CD4-positive, alpha-beta T cell (primary cell): ENCODE measurements at regions of chr10 and their contacts with region 1.

Region 1: DNA sequence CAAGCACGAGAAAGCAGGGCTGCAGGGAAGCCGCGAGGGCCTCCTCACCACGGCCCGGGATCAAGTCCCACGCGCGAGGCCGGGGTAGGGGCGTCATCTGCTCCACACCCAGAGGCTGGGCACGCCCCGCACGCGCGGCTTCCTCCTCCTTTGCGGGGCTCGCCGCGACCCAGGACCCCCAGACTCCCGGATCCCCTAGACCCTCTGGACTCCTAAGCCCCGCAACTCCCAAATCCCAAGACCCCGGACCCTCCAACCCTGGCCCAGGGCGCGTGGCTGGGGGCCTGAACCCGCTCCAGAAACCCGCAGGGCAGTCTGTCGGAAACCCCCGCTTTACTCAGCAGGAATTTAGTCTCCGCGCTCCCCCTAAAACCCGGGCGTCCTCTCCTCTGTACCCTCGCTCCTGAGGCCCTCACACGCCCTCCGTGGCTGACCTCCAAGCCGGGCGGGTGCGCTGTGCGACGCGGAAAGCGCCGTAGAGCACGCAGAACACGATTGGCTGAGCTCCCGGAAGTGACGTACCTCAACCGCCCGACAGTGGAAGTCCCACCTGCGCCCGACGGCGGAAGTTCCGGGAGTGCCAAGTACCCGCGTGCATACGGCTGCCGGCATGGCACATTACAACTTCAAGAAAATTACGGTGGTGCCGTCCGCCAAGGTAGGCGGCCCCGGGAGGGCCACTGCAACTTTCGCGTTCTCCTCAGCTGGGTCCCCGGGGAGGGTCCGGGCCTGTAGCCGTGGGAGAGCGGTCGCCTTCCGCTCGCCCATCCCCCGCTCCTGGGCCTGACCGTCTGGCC is at the start of gene GTPBP4:
- DNase-seq: peak; percentile 90 to 99 (median 96)
- ATAC-seq: peak; percentile 94
- H3K4me3 ChIP-seq: peak within 1 kb of the TSS; percentile 85
- H3K4me3 Mint-ChIP-seq: peak within 1 kb of the TSS; percentile 100
- H3K27ac ChIP-seq: peak within 1 kb of the TSS; percentile 73 to 74
- H3K27ac Mint-ChIP-seq: peak within 1 kb of the TSS; percentile 99
- H3K4me1 ChIP-seq: peaks cover 23% of the 10 kb centered on the region
- H3K4me1 Mint-ChIP-seq: peaks cover 46% of the 10 kb centered on the region
- H3K27me3 ChIP-seq: no peaks in the 10 kb centered on the region
- H3K27me3 Mint-ChIP-seq: no peaks in the 10 kb centered on the region
- CTCF ChIP-seq: peak; percentile 12
- total RNA-seq, gene GTPBP4: 50.3 to 53.7 TPM

Region 2: DNA sequence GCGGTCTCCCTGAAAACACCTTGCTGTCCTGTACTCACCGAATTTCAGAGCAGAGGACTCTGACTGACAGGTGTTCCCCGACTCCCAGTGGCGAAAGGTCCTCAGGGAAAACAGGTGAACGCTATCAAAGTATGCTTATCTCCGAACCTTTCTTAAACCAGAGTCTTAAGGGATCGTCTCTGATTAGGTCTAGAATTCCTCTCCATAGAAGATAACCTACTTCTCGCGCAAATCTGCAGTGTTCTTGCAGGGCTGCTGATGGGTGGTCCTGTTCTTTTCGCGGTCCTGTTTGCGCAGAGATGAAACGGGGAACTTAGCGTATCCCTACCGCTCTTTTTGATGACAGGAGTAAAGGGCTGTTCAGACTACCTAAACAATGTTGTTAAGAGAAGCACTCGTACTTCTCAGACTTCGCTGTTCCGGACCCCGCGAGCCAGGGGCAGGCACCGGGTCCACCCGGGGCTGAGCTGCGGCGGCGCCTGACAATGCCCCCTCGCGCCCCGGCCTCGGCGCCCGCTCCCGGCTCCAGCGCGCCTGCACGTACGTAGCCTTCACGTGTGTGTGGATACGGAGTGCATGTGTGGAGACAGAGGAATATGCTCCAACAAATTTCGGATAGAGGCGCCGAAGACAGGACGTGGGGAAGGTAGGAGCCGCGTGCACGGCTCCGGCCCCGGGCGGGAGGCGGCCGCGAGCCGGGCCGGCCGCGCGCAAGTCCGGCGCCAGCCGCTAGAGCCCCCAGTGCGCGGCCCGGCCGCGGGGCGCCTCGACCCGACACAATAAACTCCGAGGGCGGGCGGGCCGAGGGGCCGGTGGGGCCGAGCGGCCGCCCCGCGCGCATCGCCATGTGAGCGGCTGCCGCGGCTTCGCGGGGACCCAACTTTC is 853.6 kb before region 1 on chr10:
- CTCF ChIA-PET with region 1: no interaction called
- POLR2A ChIA-PET with region 1: no interaction called
- intact Hi-C with region 1: loop called in 1 of 2 experiments (anchors 5 kb)
- DNase-seq: peak in 11 of 14 experiments; percentile 5 to 59 (median 21)
- ATAC-seq: peak; percentile 6
- H3K4me3 ChIP-seq: peak overlapping the region; percentile 51
- H3K4me3 Mint-ChIP-seq: peak overlapping the region; percentile 97
- H3K27ac ChIP-seq: no peak overlapping the region
- H3K27ac Mint-ChIP-seq: peak overlapping the region; percentile 94
- H3K4me1 ChIP-seq: peaks cover 24% of the 10 kb centered on the region
- H3K4me1 Mint-ChIP-seq: peaks cover 55% of the 10 kb centered on the region
- H3K27me3 ChIP-seq: no peaks in the 10 kb centered on the region
- H3K27me3 Mint-ChIP-seq: no peaks in the 10 kb centered on the region
- CTCF ChIP-seq: no peak

Region 3: GRCh38 chr10:931416-932318 is 56.4 kb before region 1 on chr10 and contains the start of gene LARP4B:
- CTCF ChIA-PET with region 1: interaction called, 5 read pairs
- POLR2A ChIA-PET with region 1: interaction called, 21 read pairs
- intact Hi-C with region 1: loop called (anchors 1 to 2 kb)
- DNase-seq: peak; percentile 92 to 99 (median 96)
- ATAC-seq: peak; percentile 97
- H3K4me3 ChIP-seq: peak within 1 kb of the TSS; percentile 64
- H3K4me3 Mint-ChIP-seq: peak within 1 kb of the TSS; percentile 98
- H3K27ac ChIP-seq: peak within 1 kb of the TSS; percentile 50 to 89
- H3K27ac Mint-ChIP-seq: peak within 1 kb of the TSS; percentile 89
- H3K4me1 ChIP-seq: peaks cover 27% of the 10 kb centered on the region
- H3K4me1 Mint-ChIP-seq: peaks cover 48% of the 10 kb centered on the region
- H3K27me3 ChIP-seq: no peaks in the 10 kb centered on the region
- H3K27me3 Mint-ChIP-seq: no peaks in the 10 kb centered on the region
- CTCF ChIP-seq: no peak
- total RNA-seq, gene LARP4B: 33.1 to 40.2 TPM

Region 4: GRCh38 chr10:1003884-1004675 is 16.0 kb after region 1 on chr10:
- CTCF ChIA-PET with region 1: no interaction called
- POLR2A ChIA-PET with region 1: no interaction called
- intact Hi-C with region 1: no loop called
- DNase-seq: no peak
- ATAC-seq: no peak
- H3K4me3 ChIP-seq: no peak overlapping the region
- H3K4me3 Mint-ChIP-seq: no peak overlapping the region
- H3K27ac ChIP-seq: no peak overlapping the region
- H3K27ac Mint-ChIP-seq: no peak overlapping the region
- H3K4me1 ChIP-seq: no peaks in the 10 kb centered on the region
- H3K4me1 Mint-ChIP-seq: no peaks in the 10 kb centered on the region
- H3K27me3 ChIP-seq: no peaks in the 10 kb centered on the region
- H3K27me3 Mint-ChIP-seq: no peaks in the 10 kb centered on the region
- CTCF ChIP-seq: no peak

Region 5: GRCh38 chr10:1048732-1049424 is 60.8 kb after region 1 on chr10 and contains the start of gene IDI1:
- CTCF ChIA-PET with region 1: interaction called, 7 read pairs
- POLR2A ChIA-PET with region 1: interaction called, 16 read pairs
- intact Hi-C with region 1: loop called (anchors 2 kb)
- DNase-seq: peak; percentile 90 to 99 (median 95)
- ATAC-seq: peak; percentile 72
- H3K4me3 ChIP-seq: peak within 1 kb of the TSS; percentile 91
- H3K4me3 Mint-ChIP-seq: peak within 1 kb of the TSS; percentile 98
- H3K27ac ChIP-seq: peak within 1 kb of the TSS; percentile 96 to 100
- H3K27ac Mint-ChIP-seq: peak within 1 kb of the TSS; percentile 98
- H3K4me1 ChIP-seq: peaks cover 49% of the 10 kb centered on the region
- H3K4me1 Mint-ChIP-seq: peaks cover 90% of the 10 kb centered on the region
- H3K27me3 ChIP-seq: no peaks in the 10 kb centered on the region
- H3K27me3 Mint-ChIP-seq: peaks cover 5% of the 10 kb centered on the region
- CTCF ChIP-seq: no peak
- total RNA-seq, gene IDI1: 244 to 250 TPM

Region 6: GRCh38 chr10:1056326-1057105 is 68.4 kb after region 1 on chr10 and contains the start of gene WDR37:
- CTCF ChIA-PET with region 1: interaction called, 4 read pairs
- POLR2A ChIA-PET with region 1: interaction called, 3 read pairs
- intact Hi-C with region 1: loop called (anchors 2 to 5 kb)
- DNase-seq: peak; percentile 77 to 93 (median 86)
- ATAC-seq: peak; percentile 89
- H3K4me3 ChIP-seq: peak within 1 kb of the TSS; percentile 98
- H3K4me3 Mint-ChIP-seq: peak within 1 kb of the TSS; percentile 98
- H3K27ac ChIP-seq: peak within 1 kb of the TSS; percentile 69 to 83
- H3K27ac Mint-ChIP-seq: peak within 1 kb of the TSS; percentile 98
- H3K4me1 ChIP-seq: peaks cover 48% of the 10 kb centered on the region
- H3K4me1 Mint-ChIP-seq: peaks cover 91% of the 10 kb centered on the region
- H3K27me3 ChIP-seq: no peaks in the 10 kb centered on the region
- H3K27me3 Mint-ChIP-seq: no peaks in the 10 kb centered on the region
- CTCF ChIP-seq: no peak
- total RNA-seq, gene WDR37: 17.0 to 17.7 TPM

Region 7: GRCh38 chr10:1061930-1062774 is 74.1 kb after region 1 on chr10:
- CTCF ChIA-PET with region 1: no interaction called
- POLR2A ChIA-PET with region 1: no interaction called
- intact Hi-C with region 1: loop called (anchors 2 to 5 kb)
- DNase-seq: peak in 1 of 14 experiments; percentile 41
- ATAC-seq: no peak
- H3K4me3 ChIP-seq: peak overlapping the region; percentile 21
- H3K4me3 Mint-ChIP-seq: peak overlapping the region; percentile 81
- H3K27ac ChIP-seq: peak overlapping the region; percentile 55 to 65
- H3K27ac Mint-ChIP-seq: peak overlapping the region; percentile 98
- H3K4me1 ChIP-seq: peaks cover 63% of the 10 kb centered on the region
- H3K4me1 Mint-ChIP-seq: peaks cover 92% of the 10 kb centered on the region
- H3K27me3 ChIP-seq: no peaks in the 10 kb centered on the region
- H3K27me3 Mint-ChIP-seq: no peaks in the 10 kb centered on the region
- CTCF ChIP-seq: no peak